Activated naive CD4-positive, alpha-beta T cell treated with anti-CD3 and anti-CD28 coated beads for 36 hours (primary cell): ENCODE measurements at regions of chr7 and their contacts with region 1.

Region 1: GRCh38 chr7:50227726-50228125 is 76.8 kb upstream of the IKZF1 start:
- DNase-seq: no peak
- H3K4me3 Mint-ChIP-seq: peak overlapping the region; percentile 64
- H3K27ac Mint-ChIP-seq: peak overlapping the region; percentile 81
- H3K4me1 Mint-ChIP-seq: peaks cover 37% of the 10 kb centered on the region
- H3K27me3 Mint-ChIP-seq: no peaks in the 10 kb centered on the region

Region 2: GRCh38 chr7:50156706-50157105 is 71.0 kb before region 1 on chr7:
- CTCF ChIA-PET with region 1: interaction called, 3 read pairs
- intact Hi-C with region 1: loop called (anchors 1 kb)
- DNase-seq: no peak
- H3K4me3 Mint-ChIP-seq: peak overlapping the region; percentile 50
- H3K27ac Mint-ChIP-seq: peak overlapping the region; percentile 92
- H3K4me1 Mint-ChIP-seq: peaks cover 45% of the 10 kb centered on the region
- H3K27me3 Mint-ChIP-seq: no peaks in the 10 kb centered on the region

Region 3: DNA sequence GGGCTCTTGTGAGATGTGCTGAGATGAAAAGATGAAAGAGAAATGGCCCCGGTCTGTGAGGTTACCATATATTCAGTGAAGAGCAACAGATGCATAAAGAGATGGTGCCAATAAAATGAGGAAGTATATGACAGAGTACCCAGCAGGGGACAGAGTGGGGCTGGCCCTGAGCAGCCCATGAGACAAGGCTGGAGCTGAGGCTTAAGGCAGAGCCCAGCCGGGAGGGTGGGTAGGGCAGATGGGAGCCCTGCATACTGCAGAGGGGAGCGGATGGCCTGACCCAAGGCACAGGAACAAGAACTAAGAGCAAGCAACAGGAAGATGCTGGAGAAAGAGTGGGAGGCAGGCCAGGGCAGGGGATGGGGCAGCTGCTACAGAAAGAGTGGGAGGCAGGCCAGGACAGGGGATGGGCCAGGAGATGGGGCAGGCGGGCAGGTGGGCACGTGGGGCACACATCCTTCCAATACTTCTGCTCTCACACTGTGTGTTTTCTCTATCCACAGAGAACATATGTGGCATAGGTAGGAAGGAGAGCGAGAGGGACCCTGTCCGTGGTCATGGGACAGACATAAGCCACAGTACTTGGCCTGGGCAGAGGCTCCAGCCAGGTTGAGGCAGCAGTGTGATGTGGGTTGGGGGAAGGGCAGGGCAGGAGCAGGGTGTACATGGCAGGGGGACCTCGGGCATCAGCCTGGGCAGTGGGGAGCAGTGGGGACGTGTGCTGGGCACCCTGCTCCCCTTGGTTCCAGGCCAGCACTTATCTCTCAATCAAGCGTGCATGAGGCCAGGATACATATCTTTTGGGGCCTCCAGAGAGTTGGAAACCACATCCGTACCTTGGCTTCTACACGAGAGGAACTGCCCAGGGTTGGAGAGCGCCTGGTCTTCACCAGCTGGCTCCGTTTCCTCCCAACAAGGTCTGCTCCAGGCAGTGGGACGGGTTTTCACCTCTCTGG is 14.8 kb before region 1 on chr7:
- CTCF ChIA-PET with region 1: interaction called, 39 read pairs
- intact Hi-C with region 1: loop called (anchors 1 kb)
- DNase-seq: peak; percentile 65
- H3K4me3 Mint-ChIP-seq: peak overlapping the region; percentile 30
- H3K27ac Mint-ChIP-seq: peak overlapping the region; percentile 57
- H3K4me1 Mint-ChIP-seq: peaks cover 90% of the 10 kb centered on the region
- H3K27me3 Mint-ChIP-seq: no peaks in the 10 kb centered on the region